Uterus (tissue), 4 donors: ENCODE measurements at regions of chr12 and their contacts with region 1.

Region 1: DNA sequence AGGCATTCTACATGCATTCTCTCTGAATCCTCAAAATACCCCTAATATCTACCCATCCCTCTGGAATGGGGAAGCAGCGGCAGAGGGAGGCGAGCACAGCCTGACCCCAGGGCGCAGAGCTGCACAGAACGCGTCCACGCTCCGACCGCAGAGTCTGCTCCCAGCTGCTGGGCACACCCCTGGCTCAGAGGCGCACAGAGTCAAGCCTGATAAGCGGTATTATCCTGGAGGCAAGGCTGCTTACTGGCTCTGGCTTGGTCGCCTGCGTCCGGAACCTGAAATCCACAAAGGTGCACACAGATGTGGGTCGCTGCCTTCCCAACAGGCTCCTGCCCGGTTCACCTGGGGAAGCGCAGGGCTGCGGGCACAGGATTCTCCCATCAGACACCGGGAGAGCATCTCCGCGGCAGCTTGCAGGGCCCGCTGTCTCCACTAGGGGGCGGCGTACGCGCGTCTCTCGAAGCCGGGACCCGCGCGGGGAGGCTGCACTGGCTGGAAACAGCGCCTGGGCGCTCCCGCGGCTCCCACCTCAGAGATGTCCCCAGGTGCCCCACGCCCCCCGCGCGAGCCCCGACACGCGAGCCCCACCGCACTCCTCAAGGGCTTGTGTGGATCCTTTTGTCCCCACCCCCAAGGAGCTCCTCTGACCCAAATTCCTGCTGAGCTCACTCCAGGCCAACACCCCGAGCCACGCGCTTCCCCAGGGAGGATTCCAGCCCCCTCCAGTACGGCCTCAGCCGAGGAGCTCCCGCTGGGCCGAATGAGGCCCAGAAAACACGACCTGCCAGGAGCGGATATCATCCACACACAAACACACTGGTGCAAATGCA is 120.1 kb upstream of the FZD10 start:
- DNase-seq: no peak
- H3K4me3 ChIP-seq: no peak overlapping the region
- H3K27ac ChIP-seq: no peak overlapping the region
- H3K4me1 ChIP-seq: no peaks in the 10 kb centered on the region
- H3K27me3 ChIP-seq: peaks cover 0 to 19% of the 10 kb centered on the region in 2 donors
- CTCF ChIP-seq: peak; percentile 27 to 74 (median 62)
- POLR2A ChIP-seq: no peak

Region 2: DNA sequence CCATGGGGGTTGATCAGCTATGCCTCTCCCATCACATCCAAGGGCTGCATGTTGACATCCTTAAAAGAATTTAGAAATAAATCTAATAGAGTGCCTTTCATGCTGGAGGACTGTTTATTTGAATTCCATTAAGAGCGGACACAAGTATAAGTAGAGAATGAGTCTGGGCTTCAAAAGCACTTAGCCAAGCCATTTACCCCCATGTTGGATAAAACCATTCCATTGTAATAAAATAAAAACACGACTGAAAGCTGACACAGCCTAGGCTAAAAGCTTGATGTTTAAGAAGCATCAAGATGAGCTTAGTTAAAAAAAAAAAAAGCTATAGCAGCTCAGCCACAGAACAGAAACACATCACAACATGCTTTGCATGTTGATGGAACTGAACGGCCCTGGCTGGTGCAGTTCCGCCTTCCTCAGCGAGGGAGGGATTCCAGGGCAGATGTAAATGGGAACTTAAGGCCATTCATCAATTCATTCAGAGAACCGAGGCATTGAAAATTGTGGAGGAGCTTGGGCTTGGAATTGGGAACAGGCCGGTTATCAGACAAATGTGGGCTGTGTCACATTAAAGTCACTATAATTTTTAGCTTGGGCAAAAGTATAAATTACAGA is 179.5 kb before region 1 on chr12:
- intact Hi-C with region 1: no loop called
- DNase-seq: no peak
- H3K4me3 ChIP-seq: no peak overlapping the region
- H3K27ac ChIP-seq: no peak overlapping the region
- H3K4me1 ChIP-seq: no peaks in the 10 kb centered on the region
- H3K27me3 ChIP-seq: no peaks in the 10 kb centered on the region
- CTCF ChIP-seq: no peak
- POLR2A ChIP-seq: no peak

Region 3: GRCh38 chr12:130335517-130336392 is 293.6 kb after region 1 on chr12:
- intact Hi-C with region 1: loop called (anchors 10 kb)
- DNase-seq: peak in 1 of 2 donors; percentile 26
- H3K4me3 ChIP-seq: no peak overlapping the region
- H3K27ac ChIP-seq: no peak overlapping the region
- H3K4me1 ChIP-seq: peaks cover 0 to 7% of the 10 kb centered on the region in 2 donors
- H3K27me3 ChIP-seq: peaks cover 0 to 10% of the 10 kb centered on the region in 2 donors
- CTCF ChIP-seq: peak; percentile 45 to 85 (median 73)
- POLR2A ChIP-seq: no peak